Mammary epithelial cell (primary cell): ENCODE measurements at regions of chr22 and their contacts with region 1.

Region 1: GRCh38 chr22:44143105-44143474 is 37.6 kb upstream of the PARVG start:
- DNase-seq: no peak
- H3K4me3 ChIP-seq: no peak overlapping the region
- H3K27ac ChIP-seq: no peak overlapping the region
- H3K4me1 ChIP-seq: no peaks in the 10 kb centered on the region
- H3K27me3 ChIP-seq: no peaks in the 10 kb centered on the region
- CTCF ChIP-seq: no peak

Region 2: DNA sequence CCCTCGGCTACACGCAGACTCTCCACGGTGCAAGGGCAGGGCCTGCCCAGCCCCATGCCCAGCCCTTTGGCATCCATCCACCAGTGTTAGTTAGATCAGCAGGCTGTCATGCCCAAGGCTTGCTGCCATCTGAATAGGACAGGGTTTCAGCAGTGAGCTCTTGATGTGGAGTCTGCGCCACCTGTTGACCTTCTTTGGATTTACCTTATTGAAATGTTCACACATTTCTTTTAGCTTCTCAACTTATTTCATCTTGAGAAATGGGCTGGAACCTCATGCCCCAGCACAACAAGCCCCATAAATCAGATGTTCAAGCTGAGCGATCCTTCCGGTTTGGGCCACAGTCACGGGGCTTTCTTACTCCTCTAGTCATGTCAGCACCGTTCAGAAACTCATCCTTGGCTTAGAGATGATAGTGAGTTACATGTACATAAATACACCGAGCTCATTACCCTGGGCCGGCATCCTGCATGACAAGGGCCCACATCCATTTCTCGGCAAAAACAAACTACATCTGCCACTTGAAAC is 57.3 kb before region 1 on chr22:
- CTCF ChIA-PET with region 1: no interaction called
- dilution Hi-C with region 1: no loop called
- in situ Hi-C with region 1: no loop called
- intact Hi-C with region 1: no loop called
- DNase-seq: peak; percentile 69
- H3K4me3 ChIP-seq: no peak overlapping the region
- H3K27ac ChIP-seq: no peak overlapping the region
- H3K4me1 ChIP-seq: peaks cover 9% of the 10 kb centered on the region
- H3K27me3 ChIP-seq: no peaks in the 10 kb centered on the region
- CTCF ChIP-seq: peak; percentile 37 to 70

Region 3: DNA sequence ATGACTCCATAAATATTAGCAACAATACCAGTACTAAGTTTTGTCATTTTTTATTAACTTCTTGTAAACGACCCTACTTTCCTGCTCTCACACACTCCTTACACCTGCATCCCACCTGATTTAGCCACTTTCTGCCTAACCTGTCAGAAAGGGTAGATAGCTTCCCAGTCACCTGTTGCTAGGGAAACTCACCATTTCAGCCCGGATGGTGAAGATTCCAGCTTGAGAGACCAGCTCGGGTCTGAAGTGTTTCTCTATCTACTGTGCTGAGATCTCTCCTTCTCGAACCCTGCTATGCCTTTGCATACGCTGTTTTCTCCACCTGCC is 37.6 kb after region 1 on chr22 and contains the start of gene PARVG:
- CTCF ChIA-PET with region 1: no interaction called
- dilution Hi-C with region 1: loop called (anchors 5 kb)
- in situ Hi-C with region 1: no loop called
- intact Hi-C with region 1: no loop called
- DNase-seq: peak; percentile 7
- H3K4me3 ChIP-seq: no peak within 1 kb of the TSS
- H3K27ac ChIP-seq: no peak within 1 kb of the TSS
- H3K4me1 ChIP-seq: no peaks in the 10 kb centered on the region
- H3K27me3 ChIP-seq: peaks cover 9% of the 10 kb centered on the region
- CTCF ChIP-seq: no peak
- total RNA-seq, gene PARVG: not detected